ENCODE measurements at regions of chr1 and their contacts with region 1.

Region 1: DNA sequence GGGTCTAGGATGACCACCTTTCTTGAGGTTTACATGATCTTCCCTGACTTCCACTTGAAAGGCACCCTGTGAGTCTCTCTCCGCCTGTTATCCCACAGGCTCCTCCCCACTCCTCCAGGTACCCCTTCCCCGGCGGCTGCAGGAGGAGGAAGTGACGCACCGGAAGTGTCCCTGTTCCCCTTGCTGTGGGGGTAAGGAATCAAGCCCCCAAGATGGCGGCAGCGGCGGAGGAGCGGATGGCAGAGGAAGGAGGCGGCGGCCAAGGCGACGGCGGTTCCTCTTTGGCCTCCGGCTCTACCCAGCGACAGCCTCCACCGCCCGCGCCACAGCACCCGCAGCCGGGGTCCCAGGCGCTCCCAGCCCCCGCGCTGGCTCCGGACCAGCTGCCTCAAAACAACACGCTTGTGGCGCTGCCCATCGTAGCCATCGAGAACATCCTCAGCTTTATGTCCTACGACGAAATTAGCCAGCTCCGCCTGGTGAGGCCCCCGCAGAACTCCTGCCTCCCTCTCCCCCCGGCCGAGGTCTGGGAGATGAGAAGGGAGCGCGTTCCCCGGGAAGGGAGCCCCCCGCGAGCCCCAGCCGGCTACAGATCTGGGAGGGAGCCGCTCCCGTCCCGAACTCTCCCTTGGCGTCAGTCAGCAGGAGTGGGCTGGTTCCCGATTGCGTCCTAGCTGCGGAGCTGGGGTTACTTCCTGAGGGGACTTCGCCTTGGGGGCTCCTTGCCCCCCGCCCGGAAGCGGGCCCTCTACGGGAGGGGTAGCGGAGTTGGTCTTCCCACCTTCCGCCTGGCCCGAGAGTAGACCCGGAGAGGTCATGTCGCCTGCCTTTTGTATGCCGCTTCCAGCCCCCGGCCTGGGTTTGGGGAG is at the start of gene FBXO28:
- DNase-seq: peak; percentile 92
- H3K4me3 ChIP-seq: peak within 1 kb of the TSS; percentile 62 to 99 (median 97)
- H3K27ac ChIP-seq: peak within 1 kb of the TSS; percentile 78
- H3K4me1 ChIP-seq: peaks cover 21% of the 10 kb centered on the region
- H3K27me3 ChIP-seq: no peaks in the 10 kb centered on the region
- CTCF ChIP-seq: no peak
- POLR2A ChIP-seq: peak; percentile 95
- total RNA-seq, gene FBXO28: 32.6 and 35.4 TPM in 2 replicates

Region 2: DNA sequence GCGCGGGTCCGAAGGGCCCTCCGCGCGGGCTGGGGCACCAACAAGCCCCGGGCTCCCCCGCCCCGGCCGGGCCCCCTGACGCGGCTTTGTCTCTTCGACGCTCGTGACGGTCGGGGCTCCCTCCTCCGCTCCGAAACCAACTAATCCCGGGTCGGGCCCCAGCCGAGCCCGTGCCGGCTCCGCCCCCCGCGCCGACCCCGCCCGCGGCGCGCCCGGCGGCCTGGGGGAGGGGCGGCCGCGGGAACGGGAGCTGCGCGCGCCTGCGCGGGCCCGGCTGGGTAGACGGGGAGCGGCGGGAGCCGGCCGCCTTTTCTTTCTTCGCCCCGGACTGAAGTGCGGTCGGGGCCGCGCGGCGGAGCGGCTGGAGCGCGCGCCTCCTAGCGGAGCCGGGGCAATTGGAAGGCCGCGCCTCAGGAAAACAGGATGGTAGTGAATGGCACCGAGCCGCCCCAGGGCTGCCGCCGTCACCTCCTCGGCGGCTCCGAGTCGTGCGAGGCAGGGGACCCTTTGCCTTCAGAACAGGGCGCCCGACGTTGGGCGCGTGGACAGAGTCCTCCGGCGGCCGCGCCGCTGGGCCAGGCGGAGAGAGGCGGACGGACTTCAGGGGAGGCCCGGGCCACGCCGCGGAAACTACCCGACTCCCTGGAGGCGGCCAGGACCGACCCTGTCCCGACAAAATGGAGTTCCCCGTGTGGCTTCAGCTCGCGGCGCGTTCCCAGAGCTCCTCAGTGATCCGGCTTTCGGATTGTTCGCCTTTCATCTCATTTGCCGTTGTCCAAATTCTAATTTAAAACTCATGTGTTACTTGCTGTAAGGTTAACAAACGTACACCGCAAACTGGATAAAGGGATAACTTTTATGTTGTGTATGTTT is 268.1 kb before region 1 on chr1 and contains the start of gene TP53BP2:
- CTCF ChIA-PET with region 1: no interaction called
- POLR2A ChIA-PET with region 1: no interaction called
- dilution Hi-C with region 1: no loop called
- intact Hi-C with region 1: loop called (anchors 1 kb)
- DNase-seq: peak; percentile 92
- H3K4me3 ChIP-seq: peak within 1 kb of the TSS; percentile 79 to 82 (median 81)
- H3K27ac ChIP-seq: peak within 1 kb of the TSS; percentile 99
- H3K4me1 ChIP-seq: peaks cover 18% of the 10 kb centered on the region
- H3K27me3 ChIP-seq: no peaks in the 10 kb centered on the region
- CTCF ChIP-seq: peak; percentile 58 to 84
- POLR2A ChIP-seq: peak; percentile 54
- total RNA-seq, gene TP53BP2: 43.2 and 51.9 TPM in 2 replicates

Region 3: DNA sequence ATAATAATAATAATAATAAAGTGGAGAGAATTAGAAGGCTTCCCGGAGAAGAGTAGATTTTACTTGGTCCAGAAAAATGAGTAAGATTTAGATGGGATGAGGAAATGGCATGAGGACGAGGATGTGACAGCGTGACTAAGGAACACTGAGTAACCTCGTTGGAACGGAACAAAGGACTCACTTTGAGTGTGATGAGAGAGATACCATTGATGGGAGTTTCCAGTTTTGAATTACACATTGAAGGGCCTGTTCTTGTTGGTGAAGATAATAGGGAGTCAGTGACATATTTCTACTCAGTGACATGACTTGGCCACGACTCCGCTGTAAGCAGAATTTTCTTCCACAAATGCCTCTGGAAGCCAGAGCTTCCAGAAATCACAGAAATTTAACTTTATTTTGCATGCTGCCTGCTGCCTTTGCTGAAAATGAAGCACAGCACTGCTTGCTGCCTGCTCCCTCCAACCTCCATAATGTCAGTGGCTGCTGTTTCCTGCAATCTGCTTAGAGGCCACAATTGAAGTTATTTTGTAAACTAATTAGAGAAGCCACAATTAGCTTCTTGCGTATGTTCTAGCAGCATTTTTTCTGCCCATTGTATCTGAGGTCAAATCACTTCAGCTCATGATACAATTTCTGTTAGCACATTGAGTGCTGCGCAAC is 33.9 kb before region 1 on chr1:
- CTCF ChIA-PET with region 1: no interaction called
- POLR2A ChIA-PET with region 1: no interaction called
- dilution Hi-C with region 1: no loop called
- intact Hi-C with region 1: no loop called
- DNase-seq: peak; percentile 38
- H3K4me3 ChIP-seq: no peak overlapping the region
- H3K27ac ChIP-seq: no peak overlapping the region
- H3K4me1 ChIP-seq: peaks cover 8% of the 10 kb centered on the region
- H3K27me3 ChIP-seq: no peaks in the 10 kb centered on the region
- CTCF ChIP-seq: no peak
- POLR2A ChIP-seq: no peak

Region 4: GRCh38 chr1:224095867-224096266 is 18.3 kb before region 1 on chr1:
- CTCF ChIA-PET with region 1: no interaction called
- POLR2A ChIA-PET with region 1: no interaction called
- dilution Hi-C with region 1: no loop called
- intact Hi-C with region 1: no loop called
- DNase-seq: no peak
- H3K4me3 ChIP-seq: no peak overlapping the region
- H3K27ac ChIP-seq: no peak overlapping the region
- H3K4me1 ChIP-seq: no peaks in the 10 kb centered on the region
- H3K27me3 ChIP-seq: peaks cover 0 to 1% of the 10 kb centered on the region in 2 experiments
- CTCF ChIP-seq: no peak
- POLR2A ChIP-seq: no peak

Region 5: DNA sequence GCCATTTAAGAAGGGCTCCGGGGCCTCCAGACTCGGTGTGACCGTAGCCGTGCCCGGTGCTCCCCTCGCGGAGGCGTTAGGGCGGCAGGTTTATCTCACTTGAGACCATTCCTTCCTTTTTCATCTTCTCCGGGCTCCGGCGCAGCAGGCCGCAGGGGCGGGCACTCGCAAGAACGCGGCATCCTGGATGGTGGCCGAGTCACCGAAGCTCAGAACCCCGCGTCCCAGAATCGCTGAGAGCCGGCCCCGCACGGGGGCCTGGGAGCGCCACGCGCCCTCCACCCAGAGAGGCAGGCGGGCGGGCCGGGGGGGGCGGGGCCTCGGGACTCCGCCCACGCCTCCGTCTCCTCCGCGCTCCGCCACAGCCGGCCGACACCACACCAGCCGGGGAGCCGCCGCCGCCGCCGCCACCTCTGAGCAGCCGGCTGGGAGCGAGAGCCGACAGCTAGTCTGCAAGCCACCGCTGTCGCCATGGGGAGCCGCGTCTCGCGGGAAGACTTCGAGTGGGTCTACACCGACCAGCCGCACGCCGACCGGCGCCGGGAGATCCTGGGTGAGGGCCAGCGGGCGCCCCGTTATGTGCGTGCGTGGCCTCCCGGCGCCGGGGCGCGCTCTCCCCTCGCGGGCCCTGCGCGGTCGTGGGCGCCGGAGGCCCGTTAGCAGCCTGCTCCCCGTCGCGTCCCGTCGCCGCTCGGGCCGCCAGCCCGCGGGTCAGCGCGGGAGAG is 68.9 kb after region 1 on chr1 and contains the start of gene DEGS1:
- CTCF ChIA-PET with region 1: interaction called, 10 read pairs
- POLR2A ChIA-PET with region 1: no interaction called
- dilution Hi-C with region 1: no loop called
- intact Hi-C with region 1: loop called (anchors 5 kb)
- DNase-seq: peak; percentile 86
- H3K4me3 ChIP-seq: peak within 1 kb of the TSS; percentile 57 to 91 (median 68)
- H3K27ac ChIP-seq: peak within 1 kb of the TSS; percentile 70
- H3K4me1 ChIP-seq: peaks cover 5% of the 10 kb centered on the region
- H3K27me3 ChIP-seq: no peaks in the 10 kb centered on the region
- CTCF ChIP-seq: no peak
- POLR2A ChIP-seq: peak; percentile 81
- total RNA-seq, gene DEGS1: 85.8 and 87.0 TPM in 2 replicates

Region 6: DNA sequence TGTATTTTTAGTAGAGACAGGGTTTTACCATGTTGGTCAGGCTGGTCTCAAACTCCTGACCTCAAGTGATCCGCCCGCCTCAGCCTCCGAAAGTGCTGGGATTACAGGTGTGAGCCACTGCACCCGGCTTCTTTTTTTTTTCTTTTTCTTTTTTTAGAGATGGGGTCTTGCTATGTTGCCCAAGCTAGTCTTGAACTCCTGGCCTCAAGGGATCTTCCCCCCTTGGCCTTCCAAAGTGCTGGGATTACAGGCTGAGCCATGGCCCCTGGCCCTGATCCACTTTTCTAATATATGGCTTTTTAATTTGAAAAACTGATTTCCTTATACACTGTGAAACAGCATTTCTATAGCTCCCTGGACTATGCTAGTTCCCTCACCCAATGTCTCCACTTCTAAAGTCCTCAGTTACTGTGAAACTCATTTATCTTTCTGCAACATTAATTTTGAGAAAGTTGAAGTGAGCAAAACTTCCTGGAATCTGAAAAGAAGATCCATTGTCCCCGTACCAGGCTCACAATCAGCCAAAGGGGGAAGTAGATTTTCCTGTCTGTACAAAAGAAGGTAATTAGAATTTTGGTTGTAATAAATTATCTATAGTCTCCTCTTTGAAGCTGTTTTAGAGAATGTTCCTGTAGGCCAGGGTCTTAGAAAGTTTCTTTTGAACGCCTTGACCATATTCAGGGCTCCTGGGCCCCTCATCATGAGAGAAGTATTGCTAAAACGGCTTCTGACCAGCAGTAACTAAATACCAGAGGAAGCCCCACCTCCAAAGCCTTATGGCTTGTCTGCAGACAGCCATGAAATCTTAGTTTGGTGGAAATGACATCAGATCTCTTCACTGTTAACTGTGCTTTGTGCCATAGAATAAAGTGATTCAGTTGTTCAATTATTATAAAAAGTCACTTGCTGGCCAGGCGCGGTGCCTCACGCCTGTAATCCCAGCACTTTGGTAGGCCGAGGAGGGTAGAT is 103.8 kb after region 1 on chr1:
- CTCF ChIA-PET with region 1: no interaction called
- POLR2A ChIA-PET with region 1: no interaction called
- dilution Hi-C with region 1: no loop called
- intact Hi-C with region 1: no loop called
- DNase-seq: no peak
- H3K4me3 ChIP-seq: no peak overlapping the region
- H3K27ac ChIP-seq: no peak overlapping the region
- H3K4me1 ChIP-seq: peaks cover 5% of the 10 kb centered on the region
- H3K27me3 ChIP-seq: no peaks in the 10 kb centered on the region
- CTCF ChIP-seq: no peak
- POLR2A ChIP-seq: no peak

Region 7: GRCh38 chr1:224356685-224357625 is 242.8 kb after region 1 on chr1 and contains the start of gene CNIH4:
- CTCF ChIA-PET with region 1: interaction called, 10 read pairs
- POLR2A ChIA-PET with region 1: no interaction called
- dilution Hi-C with region 1: no loop called
- intact Hi-C with region 1: loop called (anchors 1 kb)
- DNase-seq: peak; percentile 95
- H3K4me3 ChIP-seq: peak within 1 kb of the TSS; percentile 67 to 71 (median 69)
- H3K27ac ChIP-seq: peak within 1 kb of the TSS; percentile 42
- H3K4me1 ChIP-seq: peaks cover 10% of the 10 kb centered on the region
- H3K27me3 ChIP-seq: no peaks in the 10 kb centered on the region
- CTCF ChIP-seq: no peak
- POLR2A ChIP-seq: peak; percentile 92
- total RNA-seq, gene CNIH4: 74.9 and 84.8 TPM in 2 replicates

Region 8: GRCh38 chr1:224851210-224851847 is 737.2 kb after region 1 on chr1:
- CTCF ChIA-PET with region 1: no interaction called
- POLR2A ChIA-PET with region 1: no interaction called
- dilution Hi-C with region 1: no loop called
- intact Hi-C with region 1: loop called (anchors 5 kb)
- DNase-seq: peak; percentile 50
- H3K4me3 ChIP-seq: no peak overlapping the region
- H3K27ac ChIP-seq: no peak overlapping the region
- H3K4me1 ChIP-seq: no peaks in the 10 kb centered on the region
- H3K27me3 ChIP-seq: no peaks in the 10 kb centered on the region
- CTCF ChIP-seq: peak; percentile 75 to 83
- POLR2A ChIP-seq: no peak